Posterior vena cava (tissue), 2 donors: ENCODE measurements at regions of chr4 and their contacts with region 1.

Region 1: DNA sequence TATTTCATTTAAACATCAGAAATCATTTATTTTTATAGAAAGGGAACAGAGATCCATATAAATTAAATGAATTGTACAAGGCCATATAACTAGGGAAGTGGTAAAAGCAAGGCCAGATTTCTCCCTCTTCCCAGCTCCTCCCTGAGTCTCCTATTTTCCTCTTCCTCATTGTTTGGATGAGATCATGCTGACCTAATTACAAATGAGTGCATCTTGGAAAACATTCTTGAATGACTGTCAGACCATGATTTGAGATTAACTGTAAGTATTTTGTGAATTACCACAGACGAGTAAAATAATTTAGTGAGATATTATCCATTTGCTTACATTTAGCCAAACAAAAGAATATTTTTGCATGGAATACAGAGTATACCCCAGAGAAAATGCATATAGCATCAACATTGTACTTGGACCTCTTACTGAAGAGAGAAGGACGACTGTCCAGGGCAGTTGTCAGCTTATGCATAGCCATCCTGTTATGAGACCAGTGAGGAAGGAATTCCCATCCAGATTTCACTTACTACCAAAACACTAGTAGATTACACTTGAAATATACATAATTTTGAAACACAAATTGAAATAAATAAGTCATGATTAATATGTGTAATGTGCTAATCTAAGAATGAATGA is 47.3 kb downstream of the SLAIN2 start:
- DNase-seq: no peak

Region 2: DNA sequence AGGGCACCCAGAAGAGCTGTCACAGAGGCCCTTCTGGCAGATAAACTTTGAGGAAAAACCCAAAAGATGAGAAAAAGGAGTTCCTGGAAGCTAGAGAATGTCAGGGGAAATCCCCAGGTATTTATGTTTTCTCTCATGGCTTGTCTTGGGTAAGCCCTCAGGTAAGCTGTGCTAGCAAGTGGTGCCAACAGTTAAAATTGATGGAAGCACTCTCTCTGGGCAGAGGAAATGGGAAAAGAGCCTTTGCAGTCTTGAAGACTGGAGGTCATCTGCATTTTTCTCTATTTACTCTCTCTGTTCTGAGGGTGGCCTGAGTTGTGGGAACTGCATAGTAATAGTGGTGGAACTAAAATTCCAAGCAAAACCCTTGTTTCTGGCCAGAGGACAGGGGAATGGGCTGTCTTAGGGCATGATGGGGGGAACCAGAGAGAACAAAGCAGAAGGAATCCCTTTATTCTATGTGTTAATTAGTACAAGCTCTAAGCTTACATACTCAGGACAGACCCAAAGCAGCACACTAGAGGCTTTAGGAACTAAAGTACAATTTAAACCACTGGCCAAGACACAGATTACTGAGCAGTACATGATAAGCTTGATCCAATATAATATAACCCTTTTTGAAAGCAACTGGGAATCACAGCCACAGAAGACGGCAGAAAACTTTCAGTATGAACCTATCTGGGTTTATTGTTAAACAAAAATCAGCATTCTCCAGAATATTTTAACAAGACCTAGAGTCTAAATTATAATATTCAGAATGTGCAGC is 41.3 kb after region 1 on chr4:
- intact Hi-C with region 1: loop called in 1 of 2 experiments (anchors 2 kb)
- DNase-seq: no peak

Region 3: DNA sequence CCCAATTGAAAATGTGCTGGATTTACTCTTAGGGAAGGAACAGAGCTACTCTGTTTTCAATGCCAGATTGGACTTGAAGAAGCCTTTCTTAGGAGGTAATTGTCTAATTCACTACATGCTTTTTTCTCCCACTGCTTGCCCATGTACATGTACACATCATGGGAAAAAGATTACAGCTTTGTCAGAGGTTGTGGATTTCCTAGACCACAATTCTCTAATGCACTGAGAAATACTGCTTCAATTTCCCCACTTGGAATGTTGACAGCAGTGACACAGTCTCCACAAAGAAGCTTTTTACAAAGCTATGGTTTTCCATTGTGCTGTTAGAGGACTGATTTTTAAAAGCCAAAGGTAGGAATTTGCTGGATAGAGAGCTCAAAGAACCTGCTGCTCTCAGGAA is 120.9 kb after region 1 on chr4:
- intact Hi-C with region 1: no loop called
- DNase-seq: no peak